HepG2 (cell line): ENCODE measurements at regions of chr1 and their contacts with region 1.

Region 1: GRCh38 chr1:153990468-153991150 is at the start of gene RPS27:
- DNase-seq: peak; percentile 98
- ATAC-seq: peak; percentile 24
- H3K4me3 ChIP-seq: peak within 1 kb of the TSS; percentile 77 to 97 (median 94)
- H3K27ac ChIP-seq: peak within 1 kb of the TSS; percentile 85
- H3K4me1 ChIP-seq: peaks cover 27% of the 10 kb centered on the region
- H3K27me3 ChIP-seq: no peaks in the 10 kb centered on the region; a peak in 1 of 5 replicates
- CTCF ChIP-seq: no peak
- EP300 ChIP-seq: peak; percentile 22 to 76; a peak in 3 of 4 replicates
- POLR2A ChIP-seq: peak; percentile 100
- RAD21 ChIP-seq: 0 out of 2 replicates have a peak, but pooled peaks have one; percentile 25
- total RNA-seq, gene RPS27: 3,737 and 4,047 TPM in 2 replicates

Region 2: GRCh38 chr1:153649863-153650235 is 340.8 kb before region 1 on chr1:
- CTCF ChIA-PET with region 1: no interaction called
- POLR2A ChIA-PET with region 1: no interaction called
- in situ Hi-C with region 1: no loop called
- intact Hi-C with region 1: no loop called
- DNase-seq: no peak
- ATAC-seq: peak; percentile 52
- H3K4me3 ChIP-seq: no peak overlapping the region
- H3K27ac ChIP-seq: no peak overlapping the region
- H3K4me1 ChIP-seq: peaks cover 23% of the 10 kb centered on the region
- H3K27me3 ChIP-seq: no peaks in the 10 kb centered on the region
- CTCF ChIP-seq: no peak
- EP300 ChIP-seq: no peak
- POLR2A ChIP-seq: no peak
- RAD21 ChIP-seq: no peak

Region 3: DNA sequence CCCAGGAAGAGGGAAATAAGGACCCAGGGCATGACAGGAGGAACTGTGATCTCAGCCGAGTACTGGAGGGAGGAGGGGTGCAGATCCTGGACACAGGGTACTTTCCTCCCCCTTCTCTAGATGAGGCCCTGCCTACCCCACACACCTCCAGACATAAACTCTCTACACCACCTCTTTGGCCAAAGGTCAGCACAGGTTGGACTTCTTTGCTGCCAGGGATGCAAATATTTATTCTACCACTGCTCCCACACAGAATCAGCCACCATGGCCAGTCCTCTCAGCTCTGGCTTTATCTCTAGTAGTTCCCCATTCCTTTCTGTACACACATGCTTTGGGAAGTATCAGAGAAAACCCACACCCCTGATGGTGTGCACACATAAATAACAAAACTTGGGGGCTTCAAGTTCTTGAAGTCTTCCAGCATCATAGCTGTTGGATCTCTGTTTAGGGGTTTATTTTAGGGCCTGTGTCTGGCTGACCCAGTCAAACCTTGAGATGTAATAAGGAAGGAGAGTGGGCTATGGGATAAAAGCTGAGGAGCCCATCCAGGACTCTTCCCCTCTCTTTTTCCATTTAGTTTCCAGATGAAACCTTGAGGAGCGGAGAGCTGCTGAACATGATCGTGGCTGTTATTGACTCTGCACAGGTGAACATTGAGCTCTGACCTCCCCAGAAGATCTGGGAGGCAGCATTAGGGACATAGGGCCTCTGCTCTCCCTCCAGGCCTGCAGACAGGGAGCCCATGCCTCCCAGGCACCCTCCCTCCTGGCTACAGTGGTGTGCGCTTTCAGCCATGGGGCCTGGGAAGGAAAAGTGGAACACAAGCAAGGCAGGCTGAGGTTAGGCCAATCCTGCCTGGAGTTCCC is 222.1 kb before region 1 on chr1:
- CTCF ChIA-PET with region 1: no interaction called
- POLR2A ChIA-PET with region 1: interaction called, 10 read pairs
- in situ Hi-C with region 1: no loop called
- intact Hi-C with region 1: no loop called
- DNase-seq: peak; percentile 87
- ATAC-seq: peak; percentile 89
- H3K4me3 ChIP-seq: peak overlapping the region in 2 of 3 experiments; percentile 13 to 27; a peak in 3 of 6 replicates
- H3K27ac ChIP-seq: peak overlapping the region; percentile 82
- H3K4me1 ChIP-seq: peaks cover 54% of the 10 kb centered on the region
- H3K27me3 ChIP-seq: no peaks in the 10 kb centered on the region
- CTCF ChIP-seq: no peak
- EP300 ChIP-seq: peak in 1 of 2 experiments; percentile 71; a peak in 2 of 4 replicates
- POLR2A ChIP-seq: peak in 1 of 2 experiments; percentile 35; a peak in 1 of 4 replicates
- RAD21 ChIP-seq: no peak

Region 4: DNA sequence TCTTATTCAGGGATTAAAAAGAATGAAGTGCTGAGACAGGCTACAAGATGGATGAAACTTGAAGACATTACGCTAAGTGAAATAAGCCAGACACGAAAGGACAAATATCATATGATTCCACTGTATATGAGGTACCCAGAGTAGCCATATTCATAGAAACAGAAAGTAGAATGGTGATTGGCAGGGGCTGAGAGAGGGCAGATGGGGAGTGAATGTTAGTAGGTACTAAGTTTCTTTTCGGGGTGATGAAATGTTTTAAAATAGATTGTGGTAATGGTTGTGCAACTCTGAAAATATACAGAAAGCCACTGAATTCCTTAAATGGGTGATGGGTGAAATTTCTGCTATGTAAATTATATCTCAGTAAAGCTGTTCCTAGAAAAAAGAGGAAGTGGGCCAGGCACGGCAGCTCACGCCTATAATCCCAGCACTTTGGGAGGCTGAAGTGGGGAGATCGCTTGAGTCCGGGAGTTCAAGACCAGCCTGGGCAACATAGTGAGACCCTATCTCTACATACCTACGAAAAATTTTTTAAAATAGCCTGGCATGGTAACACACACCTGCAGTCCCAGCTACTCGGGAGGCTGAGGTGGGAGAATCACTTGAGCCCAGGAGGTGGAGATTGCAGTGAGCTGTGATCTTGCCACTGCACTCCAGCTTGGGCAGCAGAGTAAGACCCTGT is 199.5 kb before region 1 on chr1:
- CTCF ChIA-PET with region 1: interaction called, 35 read pairs
- POLR2A ChIA-PET with region 1: interaction called, 17 read pairs
- in situ Hi-C with region 1: loop called (anchors 5 kb)
- intact Hi-C with region 1: no loop called
- DNase-seq: no peak
- ATAC-seq: no peak
- H3K4me3 ChIP-seq: no peak overlapping the region
- H3K27ac ChIP-seq: no peak overlapping the region
- H3K4me1 ChIP-seq: peaks cover 52% of the 10 kb centered on the region
- H3K27me3 ChIP-seq: peaks cover 7 to 51% of the 10 kb centered on the region in 2 experiments; a peak in 3 of 5 replicates
- CTCF ChIP-seq: no peak
- EP300 ChIP-seq: no peak
- POLR2A ChIP-seq: no peak
- RAD21 ChIP-seq: no peak

Region 5: GRCh38 chr1:153922972-153923925 is 67.4 kb before region 1 on chr1 and contains the start of gene GATAD2B:
- CTCF ChIA-PET with region 1: no interaction called
- POLR2A ChIA-PET with region 1: interaction called, 14 read pairs
- in situ Hi-C with region 1: no loop called
- intact Hi-C with region 1: no loop called
- DNase-seq: peak; percentile 99
- ATAC-seq: peak; percentile 95
- H3K4me3 ChIP-seq: peak within 1 kb of the TSS; percentile 80
- H3K27ac ChIP-seq: peak within 1 kb of the TSS; percentile 83
- H3K4me1 ChIP-seq: peaks cover 37% of the 10 kb centered on the region
- H3K27me3 ChIP-seq: no peaks in the 10 kb centered on the region; a peak in 2 of 5 replicates
- CTCF ChIP-seq: no peak
- EP300 ChIP-seq: no peak; a peak in 1 of 4 replicates
- POLR2A ChIP-seq: peak; percentile 34 to 61; a peak in 2 of 4 replicates
- RAD21 ChIP-seq: no peak; the same call in 1 of the 2 replicates
- total RNA-seq, gene GATAD2B: 3.2 and 5.3 TPM in 2 replicates

Region 6: GRCh38 chr1:153967082-153968000 is 23.3 kb before region 1 on chr1 and contains the start of gene CREB3L4:
- CTCF ChIA-PET with region 1: no interaction called
- POLR2A ChIA-PET with region 1: interaction called, 92 read pairs
- in situ Hi-C with region 1: no loop called
- intact Hi-C with region 1: no loop called
- DNase-seq: peak; percentile 97
- ATAC-seq: peak; percentile 86
- H3K4me3 ChIP-seq: peak within 1 kb of the TSS; percentile 62 to 82 (median 72)
- H3K27ac ChIP-seq: peak within 1 kb of the TSS; percentile 83
- H3K4me1 ChIP-seq: peaks cover 30% of the 10 kb centered on the region
- H3K27me3 ChIP-seq: no peaks in the 10 kb centered on the region; a peak in 1 of 5 replicates
- CTCF ChIP-seq: peak; percentile 81
- EP300 ChIP-seq: 0 out of 4 replicates have a peak, but pooled peaks of 1 of the 2 experiments have one; percentile 17
- POLR2A ChIP-seq: peak; percentile 93 to 96
- RAD21 ChIP-seq: peak; percentile 63; the same call in 1 of the 2 replicates
- total RNA-seq, gene CREB3L4: 7.8 and 9.9 TPM in 2 replicates